ENCODE measurements at regions of chr14 and their contacts with region 1.

Region 1: GRCh38 chr14:100192672-100193416 is 33.4 kb upstream of the DEGS2 start:
- DNase-seq: peak; percentile 97 to 100 (median 98)
- H3K4me3 ChIP-seq: peak overlapping the region; percentile 46 to 77 (median 64)
- H3K27ac ChIP-seq: peak overlapping the region; percentile 80 to 99 (median 92)
- H3K27me3 ChIP-seq: no peaks in the 10 kb centered on the region
- CTCF ChIP-seq: peak; percentile 75 to 100 (median 97)

Region 2: DNA sequence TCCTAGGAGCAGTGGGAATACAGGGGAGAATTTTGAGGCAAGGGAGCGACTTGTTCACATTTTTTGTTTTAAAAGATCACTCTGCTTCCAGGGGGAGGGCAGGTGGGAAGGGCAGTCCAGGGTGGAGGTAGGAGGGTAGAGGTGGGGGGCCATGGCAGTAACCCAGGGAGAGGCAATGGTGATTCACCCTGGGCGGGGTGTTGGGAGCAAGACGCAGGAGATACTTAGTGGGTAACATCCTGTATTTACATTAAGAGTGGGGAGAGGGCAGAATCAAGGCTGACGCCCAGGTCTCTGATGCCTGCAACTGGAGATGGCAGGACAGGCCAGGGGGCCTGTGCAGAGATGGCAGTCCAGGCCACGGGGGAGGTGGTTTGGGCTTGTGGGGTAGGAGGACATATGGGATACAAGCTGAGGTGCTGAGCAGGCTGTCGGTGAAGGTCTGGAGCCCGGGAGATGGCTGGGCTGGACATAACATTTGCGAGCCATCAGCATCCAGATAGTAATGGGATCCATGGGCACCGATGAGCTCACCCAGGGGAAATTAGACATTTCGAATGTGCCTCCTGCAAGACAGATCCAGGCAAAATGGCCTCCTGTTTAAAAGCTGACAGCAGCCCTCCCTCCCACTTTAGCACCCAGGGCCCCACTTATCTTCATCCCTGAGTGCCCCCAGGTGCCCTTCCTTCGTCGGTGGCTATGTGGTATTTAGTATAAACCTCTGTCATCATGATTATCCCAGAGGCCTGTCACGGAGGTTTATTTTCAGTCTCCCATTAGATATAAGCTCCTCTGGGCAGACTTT is 390.3 kb before region 1 on chr14:
- intact Hi-C with region 1: no loop called
- DNase-seq: no peak
- H3K4me3 ChIP-seq: no peak overlapping the region
- H3K27ac ChIP-seq: peak overlapping the region in 3 of 59 donors; percentile 21 to 27 (median 27)
- H3K27me3 ChIP-seq: no peaks in the 10 kb centered on the region
- CTCF ChIP-seq: no peak

Region 3: GRCh38 chr14:99982537-99983250 is 210.2 kb before region 1 on chr14:
- intact Hi-C with region 1: loop called (anchors 2 to 5 kb)
- DNase-seq: peak in 5 of 10 donors; percentile 43 to 66 (median 57)
- H3K4me3 ChIP-seq: peak overlapping the region in 5 of 59 donors; percentile 3 to 31 (median 11)
- H3K27ac ChIP-seq: peak overlapping the region in 10 of 59 donors; percentile 4 to 57 (median 34)
- H3K27me3 ChIP-seq: no peaks in the 10 kb centered on the region
- CTCF ChIP-seq: peak; percentile 80 to 98 (median 92)

Region 4: GRCh38 chr14:100093319-100093718 is 99.5 kb before region 1 on chr14:
- intact Hi-C with region 1: no loop called
- DNase-seq: no peak
- H3K4me3 ChIP-seq: no peak overlapping the region
- H3K27ac ChIP-seq: no peak overlapping the region
- H3K27me3 ChIP-seq: no peaks in the 10 kb centered on the region
- CTCF ChIP-seq: no peak

Region 5: DNA sequence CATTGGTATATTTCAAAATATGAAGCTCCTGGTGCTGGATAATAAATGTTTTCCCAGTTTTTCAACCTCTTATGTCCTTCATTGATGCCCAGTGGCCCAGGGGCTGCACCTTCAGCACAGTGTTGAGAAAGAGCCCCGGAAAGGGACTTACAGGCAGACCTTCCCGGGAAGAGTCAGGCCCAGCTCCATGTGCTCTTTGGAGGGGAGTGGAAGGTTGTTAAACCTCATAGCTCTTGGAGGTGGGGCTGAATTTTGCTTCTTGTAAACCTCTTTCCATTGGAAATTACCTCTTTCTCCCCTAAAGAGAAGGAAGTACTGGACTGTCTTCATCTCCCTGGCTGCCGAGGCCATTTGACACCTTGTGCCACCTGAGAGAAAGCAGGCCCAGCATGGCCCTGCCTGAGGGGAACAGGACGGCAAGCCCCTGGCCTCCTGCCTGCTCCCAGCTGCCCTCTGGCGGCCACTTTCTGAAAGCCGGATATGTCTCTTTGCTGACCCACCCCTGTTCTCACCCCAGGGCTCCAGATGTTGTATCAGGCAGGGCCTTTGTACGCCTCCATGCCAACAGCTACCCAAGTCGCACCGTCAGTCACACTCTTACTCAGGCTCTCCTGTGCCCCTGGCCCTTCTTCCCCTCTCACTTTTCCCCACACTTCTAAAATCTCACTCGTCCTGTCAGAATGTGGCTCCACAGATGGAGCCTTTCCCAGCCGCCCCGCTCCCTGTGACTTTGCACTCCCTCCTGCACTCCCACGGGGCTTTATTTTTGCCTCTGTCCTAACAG is 84.6 kb before region 1 on chr14:
- intact Hi-C with region 1: loop called in 1 of 2 experiments (anchors 5 kb)
- DNase-seq: peak; percentile 77 to 87 (median 81)
- H3K4me3 ChIP-seq: peak overlapping the region in 1 of 59 donors; percentile 23
- H3K27ac ChIP-seq: peak overlapping the region; percentile 0 to 89 (median 75)
- H3K27me3 ChIP-seq: no peaks in the 10 kb centered on the region
- CTCF ChIP-seq: peak; percentile 70 to 94 (median 88)

Region 6: GRCh38 chr14:100213956-100214774 is 21.3 kb after region 1 on chr14:
- intact Hi-C with region 1: loop called in 1 of 2 experiments (anchors 2 kb)
- DNase-seq: peak; percentile 36 to 87 (median 68)
- H3K4me3 ChIP-seq: peak overlapping the region; percentile 47 to 98 (median 86)
- H3K27ac ChIP-seq: peak overlapping the region; percentile 42 to 96 (median 88)
- H3K27me3 ChIP-seq: no peaks in the 10 kb centered on the region
- CTCF ChIP-seq: peak in 7 of 56 donors; percentile 9 to 41 (median 19)